AG04449 (cell line): ENCODE measurements at regions of chr9 and their contacts with region 1.

Region 1: GRCh38 chr9:33750307-33750838 is 45.0 kb upstream of the PRSS3 start:
- DNase-seq: no peak
- H3K4me3 ChIP-seq: peak overlapping the region; percentile 54
- CTCF ChIP-seq: no peak

Region 2: DNA sequence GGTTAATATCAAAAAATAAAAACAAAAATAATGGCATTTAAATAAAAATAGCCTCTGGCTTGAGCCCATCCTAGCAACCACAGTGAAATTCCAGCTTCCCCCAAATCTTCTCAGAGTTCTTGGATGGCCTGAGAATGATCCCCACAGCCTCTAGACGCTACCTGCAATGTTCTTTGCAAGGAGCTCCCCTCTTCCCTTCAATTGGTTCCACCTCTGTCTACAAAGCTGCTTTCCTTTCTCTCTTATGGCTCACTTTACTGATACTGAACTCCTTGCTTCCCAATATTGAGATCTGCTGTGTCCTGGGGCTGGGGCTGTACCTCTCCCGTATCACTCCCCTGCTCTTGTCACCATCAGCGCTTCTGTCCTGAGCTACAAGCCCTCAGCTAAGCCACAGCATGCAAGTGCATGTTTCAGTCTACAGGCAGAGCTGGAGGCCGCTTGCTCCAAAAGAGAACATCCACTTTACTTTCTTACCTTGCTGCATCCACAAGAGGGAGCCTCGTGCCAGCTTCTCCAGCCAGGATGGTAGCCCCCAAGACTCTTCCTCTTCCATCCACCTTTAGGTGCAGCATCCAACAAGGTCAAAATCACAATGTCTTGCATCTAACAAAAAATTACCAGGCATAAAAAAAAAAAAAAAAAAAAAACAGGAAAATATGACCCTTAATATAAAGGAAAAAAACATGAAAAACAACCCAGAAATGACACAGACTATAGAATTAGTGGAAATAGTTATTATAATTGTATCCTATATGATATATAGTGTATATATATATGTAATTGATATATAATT is 12.4 kb before region 1 on chr9:
- CTCF ChIA-PET with region 1: interaction called, 26 read pairs
- POLR2A ChIA-PET with region 1: no interaction called
- DNase-seq: peak; percentile 14
- H3K4me3 ChIP-seq: no peak overlapping the region
- CTCF ChIP-seq: peak; percentile 79

Region 3: GRCh38 chr9:33860200-33860871 is 110.0 kb after region 1 on chr9:
- CTCF ChIA-PET with region 1: no interaction called
- POLR2A ChIA-PET with region 1: no interaction called
- DNase-seq: no peak
- H3K4me3 ChIP-seq: no peak overlapping the region
- CTCF ChIP-seq: no peak